ENCODE measurements at regions of chr10 and their contacts with region 1.

Region 1: GRCh38 chr10:93352638-93353383 is 129.3 kb downstream of the MYOF start:
- DNase-seq: peak; percentile 42
- ATAC-seq: no peak
- H3K4me3 ChIP-seq: no peak overlapping the region
- H3K27ac ChIP-seq: no peak overlapping the region
- H3K4me1 ChIP-seq: no peaks in the 10 kb centered on the region
- H3K27me3 ChIP-seq: no peaks in the 10 kb centered on the region
- CTCF ChIP-seq: peak; percentile 57
- EP300 ChIP-seq: no peak
- POLR2A ChIP-seq: no peak
- RAD21 ChIP-seq: peak; percentile 26; the same call in 1 of the 2 replicates

Region 2: GRCh38 chr10:92699518-92700381 is 653.1 kb before region 1 on chr10:
- CTCF ChIA-PET with region 1: no interaction called
- POLR2A ChIA-PET with region 1: no interaction called
- in situ Hi-C with region 1: no loop called
- intact Hi-C with region 1: no loop called
- DNase-seq: no peak
- ATAC-seq: no peak
- H3K4me3 ChIP-seq: no peak overlapping the region
- H3K27ac ChIP-seq: no peak overlapping the region
- H3K4me1 ChIP-seq: peaks cover 55% of the 10 kb centered on the region
- H3K27me3 ChIP-seq: no peaks in the 10 kb centered on the region
- CTCF ChIP-seq: no peak
- EP300 ChIP-seq: no peak
- POLR2A ChIP-seq: no peak
- RAD21 ChIP-seq: no peak

Region 3: DNA sequence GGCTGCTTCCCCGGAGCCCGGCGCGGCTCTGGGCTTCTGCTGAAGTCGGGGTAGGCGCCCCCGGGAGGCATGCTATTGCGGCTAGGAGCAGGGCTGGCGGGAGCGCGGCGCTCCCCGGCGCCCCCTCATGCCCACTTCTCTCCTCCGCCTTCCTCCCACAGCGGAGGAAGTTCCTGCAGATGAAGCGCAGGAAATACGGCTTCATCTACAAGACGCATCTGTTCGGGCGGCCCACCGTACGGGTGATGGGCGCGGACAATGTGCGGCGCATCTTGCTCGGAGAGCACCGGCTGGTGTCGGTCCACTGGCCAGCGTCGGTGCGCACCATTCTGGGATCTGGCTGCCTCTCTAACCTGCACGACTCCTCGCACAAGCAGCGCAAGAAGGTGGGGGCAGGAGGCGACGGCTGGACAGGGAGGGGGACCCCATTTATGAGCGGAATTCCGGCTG is 278.6 kb before region 1 on chr10:
- CTCF ChIA-PET with region 1: interaction called, 9 read pairs
- POLR2A ChIA-PET with region 1: no interaction called
- in situ Hi-C with region 1: no loop called
- intact Hi-C with region 1: loop called (anchors 5 kb)
- DNase-seq: no peak
- ATAC-seq: peak; percentile 39
- H3K4me3 ChIP-seq: peak overlapping the region; percentile 56 to 77 (median 58); a peak in 5 of 6 replicates
- H3K27ac ChIP-seq: no peak overlapping the region
- H3K4me1 ChIP-seq: peaks cover 36% of the 10 kb centered on the region
- H3K27me3 ChIP-seq: peaks cover 11 to 56% of the 10 kb centered on the region in 2 experiments; a peak in 4 of 5 replicates
- CTCF ChIP-seq: peak; percentile 47
- EP300 ChIP-seq: no peak
- POLR2A ChIP-seq: no peak
- RAD21 ChIP-seq: no peak

Region 4: GRCh38 chr10:93080350-93081046 is 272.3 kb before region 1 on chr10:
- CTCF ChIA-PET with region 1: interaction called, 9 read pairs
- POLR2A ChIA-PET with region 1: no interaction called
- in situ Hi-C with region 1: loop called (anchors 5 kb)
- intact Hi-C with region 1: loop called (anchors 1 kb)
- DNase-seq: peak; percentile 29
- ATAC-seq: peak; percentile 81
- H3K4me3 ChIP-seq: no peak overlapping the region
- H3K27ac ChIP-seq: no peak overlapping the region
- H3K4me1 ChIP-seq: peaks cover 41% of the 10 kb centered on the region
- H3K27me3 ChIP-seq: peaks cover 0 to 15% of the 10 kb centered on the region in 2 experiments; a peak in 2 of 5 replicates
- CTCF ChIP-seq: peak; percentile 83
- EP300 ChIP-seq: no peak
- POLR2A ChIP-seq: no peak
- RAD21 ChIP-seq: peak; percentile 80

Region 5: GRCh38 chr10:93095225-93095624 is 257.6 kb before region 1 on chr10:
- CTCF ChIA-PET with region 1: no interaction called
- POLR2A ChIA-PET with region 1: no interaction called
- in situ Hi-C with region 1: no loop called
- intact Hi-C with region 1: no loop called
- DNase-seq: no peak
- ATAC-seq: peak; percentile 52; the same call in 1 of the 3 replicates
- H3K4me3 ChIP-seq: no peak overlapping the region
- H3K27ac ChIP-seq: no peak overlapping the region
- H3K4me1 ChIP-seq: no peaks in the 10 kb centered on the region
- H3K27me3 ChIP-seq: no peaks in the 10 kb centered on the region; a peak in 1 of 5 replicates
- CTCF ChIP-seq: peak; percentile 30; the same call in 1 of the 2 replicates
- EP300 ChIP-seq: no peak
- POLR2A ChIP-seq: no peak
- RAD21 ChIP-seq: no peak

Measured in HepG2 (cell line).